H1 (cell line): ENCODE measurements at regions of chr2 and their contacts with region 1.

Region 1: GRCh38 chr2:183105402-183106134 is 18.7 kb upstream of the NUP35 start:
- DNase-seq: no peak
- H3K4me3 ChIP-seq: no peak overlapping the region
- H3K27ac ChIP-seq: no peak overlapping the region
- H3K4me1 ChIP-seq: no peaks in the 10 kb centered on the region
- H3K27me3 ChIP-seq: no peaks in the 10 kb centered on the region
- CTCF ChIP-seq: no peak
- EP300 ChIP-seq: no peak
- POLR2A ChIP-seq: no peak
- RAD21 ChIP-seq: no peak

Region 2: DNA sequence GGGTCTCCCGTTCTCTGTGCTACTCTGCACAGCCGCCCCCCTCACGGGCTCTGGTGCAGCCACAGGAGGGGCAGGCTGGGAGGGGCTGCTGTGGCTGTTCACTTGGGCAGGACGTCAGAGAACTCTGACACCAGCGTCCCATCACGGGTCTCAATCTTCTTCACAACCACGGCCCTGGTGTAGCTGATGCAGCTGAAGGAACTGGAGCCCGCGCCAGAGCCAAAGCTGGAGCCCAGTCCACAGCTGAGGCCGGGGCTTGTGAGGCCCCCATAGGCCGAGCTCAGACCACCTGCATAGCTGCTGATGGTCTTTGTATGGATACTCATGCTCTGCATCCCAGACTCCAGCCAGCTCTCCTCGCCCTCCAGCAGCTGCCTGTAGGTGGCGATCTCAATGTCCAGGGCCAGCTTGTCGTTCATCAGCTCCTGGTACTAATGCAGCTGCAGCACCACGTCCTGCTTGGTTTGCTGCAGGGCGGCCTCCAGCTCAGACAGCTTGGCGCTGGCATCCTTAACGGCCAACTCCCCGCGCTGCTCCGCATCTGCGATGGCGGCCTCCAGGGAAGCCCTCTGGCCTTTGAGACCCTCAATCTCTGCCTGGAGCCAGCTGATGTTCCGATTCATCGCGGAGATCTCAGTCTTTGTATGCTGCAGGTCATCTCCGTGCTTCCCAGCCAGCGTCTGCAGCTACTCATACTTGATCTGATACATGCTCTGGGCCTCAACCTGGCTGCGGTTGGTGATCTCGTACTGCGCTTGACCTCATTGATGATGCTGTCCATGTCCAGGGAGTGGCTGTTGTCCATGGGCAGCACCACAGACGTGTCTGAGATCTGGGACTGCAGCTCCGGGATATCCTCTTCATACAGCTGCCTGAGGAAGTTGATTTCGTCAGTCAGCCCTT is 34.4 kb before region 1 on chr2:
- CTCF ChIA-PET with region 1: interaction called, 11 read pairs
- POLR2A ChIA-PET with region 1: no interaction called
- DNase-seq: peak; percentile 51 to 89
- H3K4me3 ChIP-seq: no peak overlapping the region
- H3K27ac ChIP-seq: no peak overlapping the region
- H3K4me1 ChIP-seq: peaks cover 0 to 1% (median 0%) of the 10 kb centered on the region in 4 experiments; a peak in 2 of 7 replicates
- H3K27me3 ChIP-seq: no peaks in the 10 kb centered on the region
- CTCF ChIP-seq: peak; percentile 61 to 95 (median 92)
- EP300 ChIP-seq: no peak
- POLR2A ChIP-seq: no peak
- RAD21 ChIP-seq: peak; percentile 57 to 72

Region 3: DNA sequence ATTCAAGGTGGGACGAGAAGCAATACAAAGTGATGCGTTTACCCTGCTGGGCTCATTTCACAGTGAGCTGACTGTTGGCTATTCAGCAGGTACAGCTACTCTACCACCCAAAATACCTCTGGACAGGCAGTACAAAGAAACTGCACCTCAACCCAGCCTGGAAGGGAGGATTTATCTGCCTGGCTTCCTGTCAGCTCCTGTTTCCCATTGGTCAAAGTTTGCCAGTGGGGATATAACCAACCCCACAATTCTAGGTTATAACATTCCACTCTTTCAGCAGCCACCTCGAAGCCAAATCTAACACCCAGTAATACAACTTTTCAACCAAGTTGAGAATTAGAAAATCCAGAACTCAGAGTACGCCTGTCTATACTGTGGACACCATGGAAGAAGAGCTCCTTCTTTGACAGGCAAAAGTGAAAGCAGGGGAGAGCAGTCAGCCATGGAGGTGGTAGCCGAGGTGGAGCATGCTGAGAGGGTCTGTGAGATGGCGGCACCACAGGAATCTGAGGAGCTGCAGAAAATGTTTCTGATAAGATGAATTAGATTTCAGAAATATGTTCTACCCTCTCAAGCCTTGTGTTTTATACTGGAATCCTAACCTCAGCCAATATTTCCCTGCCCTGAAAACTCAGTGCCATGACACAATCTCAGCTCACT is 16.2 kb before region 1 on chr2:
- CTCF ChIA-PET with region 1: no interaction called
- POLR2A ChIA-PET with region 1: no interaction called
- DNase-seq: no peak
- H3K4me3 ChIP-seq: no peak overlapping the region
- H3K27ac ChIP-seq: no peak overlapping the region
- H3K4me1 ChIP-seq: no peaks in the 10 kb centered on the region
- H3K27me3 ChIP-seq: no peaks in the 10 kb centered on the region
- CTCF ChIP-seq: no peak
- EP300 ChIP-seq: no peak
- POLR2A ChIP-seq: no peak
- RAD21 ChIP-seq: no peak

Region 4: GRCh38 chr2:183124222-183124956 is 18.8 kb after region 1 on chr2 and contains the start of gene NUP35:
- CTCF ChIA-PET with region 1: no interaction called
- POLR2A ChIA-PET with region 1: interaction called, 12 read pairs
- DNase-seq: peak; percentile 82 to 94
- H3K4me3 ChIP-seq: peak within 1 kb of the TSS; percentile 72 to 96 (median 92)
- H3K27ac ChIP-seq: peak within 1 kb of the TSS; percentile 97
- H3K4me1 ChIP-seq: peaks cover 0 to 12% (median 5%) of the 10 kb centered on the region in 4 experiments; a peak in 6 of 7 replicates
- H3K27me3 ChIP-seq: no peaks in the 10 kb centered on the region
- CTCF ChIP-seq: no peak
- EP300 ChIP-seq: peak in 1 of 2 experiments; percentile 28; a peak in 1 of 3 replicates
- POLR2A ChIP-seq: peak; percentile 84 to 95
- RAD21 ChIP-seq: peak in 1 of 2 experiments; percentile 7; a peak in 1 of 4 replicates
- total RNA-seq, gene NUP35: 48.5 and 48.7 TPM in 2 replicates